B cell (primary cell): ENCODE measurements at regions of chr4 and their contacts with region 1.

Region 1: GRCh38 chr4:139099366-139099982 is 77.5 kb downstream of the ELF2 start:
- DNase-seq: peak; percentile 87
- ATAC-seq: peak; percentile 75
- H3K4me3 ChIP-seq: no peak overlapping the region
- H3K4me3 Mint-ChIP-seq: no peak overlapping the region
- H3K27ac ChIP-seq: no peak overlapping the region
- H3K27ac Mint-ChIP-seq: no peak overlapping the region
- H3K4me1 ChIP-seq: no peaks in the 10 kb centered on the region
- H3K4me1 Mint-ChIP-seq: peaks cover 2% of the 10 kb centered on the region
- H3K27me3 ChIP-seq: no peaks in the 10 kb centered on the region
- H3K27me3 Mint-ChIP-seq: no peaks in the 10 kb centered on the region
- CTCF ChIP-seq: peak; percentile 89

Region 2: DNA sequence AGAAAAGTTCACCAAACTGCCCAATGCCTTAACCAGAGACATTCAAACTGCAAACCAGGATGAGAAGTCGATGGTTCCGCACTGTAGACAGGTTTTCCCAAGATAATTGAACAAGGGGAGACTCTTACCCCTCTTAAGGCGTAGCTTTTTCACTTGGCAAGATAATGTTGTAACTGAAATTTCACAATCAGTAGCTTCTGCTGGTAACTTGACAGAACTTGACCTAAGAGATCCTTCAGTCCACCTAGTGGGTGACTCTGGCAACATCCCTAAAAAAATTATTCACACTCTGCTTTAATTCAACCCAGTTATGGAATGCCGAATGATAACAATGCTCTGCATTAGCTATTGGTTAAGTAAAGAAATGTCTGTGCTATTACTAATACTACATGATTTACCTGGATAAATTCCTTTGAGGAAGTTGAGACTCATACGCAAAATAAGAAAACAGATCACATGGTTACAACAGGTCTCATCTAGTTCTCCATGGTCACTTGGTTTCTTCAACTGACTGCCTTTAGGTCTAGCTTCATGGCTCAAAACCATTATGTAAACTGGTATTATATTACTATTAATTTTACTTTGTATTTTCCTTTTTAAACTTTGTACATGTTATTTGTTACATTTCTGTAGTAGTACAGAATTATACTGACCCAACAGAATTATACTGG is 68.4 kb after region 1 on chr4:
- CTCF ChIA-PET with region 1: interaction called, 12 read pairs
- POLR2A ChIA-PET with region 1: no interaction called
- intact Hi-C with region 1: no loop called
- DNase-seq: peak; percentile 36
- ATAC-seq: no peak
- H3K4me3 ChIP-seq: no peak overlapping the region
- H3K4me3 Mint-ChIP-seq: no peak overlapping the region
- H3K27ac ChIP-seq: no peak overlapping the region
- H3K27ac Mint-ChIP-seq: no peak overlapping the region
- H3K4me1 ChIP-seq: no peaks in the 10 kb centered on the region
- H3K4me1 Mint-ChIP-seq: peaks cover 18% of the 10 kb centered on the region
- H3K27me3 ChIP-seq: no peaks in the 10 kb centered on the region
- H3K27me3 Mint-ChIP-seq: no peaks in the 10 kb centered on the region
- CTCF ChIP-seq: peak; percentile 43

Region 3: DNA sequence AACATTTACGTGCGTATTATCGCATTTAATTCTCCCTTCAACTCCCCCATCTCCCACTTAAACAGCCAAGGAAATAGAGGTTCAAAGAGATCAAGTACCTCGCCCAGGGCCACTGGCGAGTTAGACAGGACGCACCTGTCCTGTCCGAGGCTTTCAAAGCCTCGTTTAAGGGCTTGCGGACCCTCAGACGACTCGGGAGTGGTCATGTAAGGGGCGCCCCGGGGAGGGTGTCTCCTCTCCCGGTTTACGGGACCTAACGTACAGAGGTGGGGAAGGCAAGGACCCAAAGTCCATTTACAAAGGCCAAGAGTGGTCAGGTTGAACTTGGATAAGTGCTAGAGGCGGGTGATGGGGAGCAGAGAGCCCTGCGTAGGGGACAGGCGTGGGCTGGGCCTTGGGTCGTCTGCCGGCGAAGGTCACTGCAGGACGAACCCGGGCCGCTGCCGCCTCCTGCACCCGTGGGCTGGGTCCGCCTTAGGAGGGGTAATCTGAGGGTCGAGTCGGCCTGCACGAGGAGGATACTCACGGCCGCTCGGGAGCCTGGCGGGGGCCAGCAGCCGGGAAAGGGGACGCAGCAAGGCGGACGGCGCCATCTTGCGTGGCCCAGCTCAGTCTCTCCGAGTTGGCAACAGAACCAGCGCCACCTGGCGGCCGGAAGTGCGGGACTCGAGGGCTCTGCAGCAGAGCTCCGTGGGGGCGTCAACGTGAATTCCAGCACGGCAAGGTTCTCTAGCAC is 195.9 kb after region 1 on chr4:
- CTCF ChIA-PET with region 1: interaction called, 81 read pairs
- POLR2A ChIA-PET with region 1: no interaction called
- intact Hi-C with region 1: loop called (anchors 1 kb)
- DNase-seq: peak; percentile 96
- ATAC-seq: peak; percentile 98
- H3K4me3 ChIP-seq: peak overlapping the region; percentile 78 to 96 (median 91)
- H3K4me3 Mint-ChIP-seq: peak overlapping the region; percentile 97
- H3K27ac ChIP-seq: peak overlapping the region; percentile 89 to 92
- H3K27ac Mint-ChIP-seq: peak overlapping the region; percentile 96
- H3K4me1 ChIP-seq: peaks cover 16 to 23% of the 10 kb centered on the region in 2 donors
- H3K4me1 Mint-ChIP-seq: peaks cover 26% of the 10 kb centered on the region
- H3K27me3 ChIP-seq: no peaks in the 10 kb centered on the region
- H3K27me3 Mint-ChIP-seq: no peaks in the 10 kb centered on the region
- CTCF ChIP-seq: peak; percentile 93

Region 4: DNA sequence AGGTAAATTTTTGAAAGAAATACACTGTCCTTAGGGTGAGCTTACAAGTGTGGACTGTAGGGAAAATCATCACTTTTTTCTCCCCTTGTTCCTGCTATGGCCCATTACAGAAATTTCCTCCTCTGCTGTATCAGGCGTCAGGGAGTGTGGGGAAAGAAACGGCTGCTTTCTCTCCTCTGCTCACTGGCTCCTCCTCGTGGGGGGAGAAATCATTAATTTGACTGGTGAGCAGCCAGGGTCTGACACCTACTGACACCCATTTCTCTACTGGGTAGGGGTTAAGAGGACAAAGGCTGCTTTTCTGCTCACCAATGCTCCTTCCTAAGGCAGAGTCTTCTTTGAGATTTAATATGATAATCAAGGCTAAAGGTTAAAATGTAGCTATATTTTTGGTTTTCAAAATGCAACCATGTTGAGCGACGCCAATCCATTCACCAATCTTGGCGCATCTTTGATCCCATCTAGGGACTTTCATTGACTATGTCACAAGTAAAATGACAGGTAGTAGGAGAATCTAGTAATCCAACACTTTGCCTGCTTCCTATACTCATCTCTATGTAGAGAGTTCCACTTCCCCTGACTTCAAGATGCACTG is 431.5 kb after region 1 on chr4:
- CTCF ChIA-PET with region 1: interaction called, 7 read pairs
- POLR2A ChIA-PET with region 1: no interaction called
- intact Hi-C with region 1: loop called (anchors 5 kb)
- DNase-seq: peak; percentile 66
- ATAC-seq: peak; percentile 76
- H3K4me3 ChIP-seq: no peak overlapping the region
- H3K4me3 Mint-ChIP-seq: no peak overlapping the region
- H3K27ac ChIP-seq: no peak overlapping the region
- H3K27ac Mint-ChIP-seq: no peak overlapping the region
- H3K4me1 ChIP-seq: no peaks in the 10 kb centered on the region
- H3K4me1 Mint-ChIP-seq: peaks cover 3% of the 10 kb centered on the region
- H3K27me3 ChIP-seq: no peaks in the 10 kb centered on the region
- H3K27me3 Mint-ChIP-seq: no peaks in the 10 kb centered on the region
- CTCF ChIP-seq: peak; percentile 82

Region 5: GRCh38 chr4:139651282-139652194 is 552.1 kb after region 1 on chr4:
- CTCF ChIA-PET with region 1: interaction called, 3 read pairs
- POLR2A ChIA-PET with region 1: no interaction called
- intact Hi-C with region 1: loop called (anchors 1 kb)
- DNase-seq: peak; percentile 82
- ATAC-seq: peak; percentile 81
- H3K4me3 ChIP-seq: no peak overlapping the region
- H3K4me3 Mint-ChIP-seq: no peak overlapping the region
- H3K27ac ChIP-seq: no peak overlapping the region
- H3K27ac Mint-ChIP-seq: no peak overlapping the region
- H3K4me1 ChIP-seq: no peaks in the 10 kb centered on the region
- H3K4me1 Mint-ChIP-seq: peaks cover 4% of the 10 kb centered on the region
- H3K27me3 ChIP-seq: no peaks in the 10 kb centered on the region
- H3K27me3 Mint-ChIP-seq: peaks cover 15% of the 10 kb centered on the region
- CTCF ChIP-seq: peak; percentile 98